Breast epithelium (tissue), 4 donors: ENCODE measurements at regions of chr2 and their contacts with region 1.

Region 1: DNA sequence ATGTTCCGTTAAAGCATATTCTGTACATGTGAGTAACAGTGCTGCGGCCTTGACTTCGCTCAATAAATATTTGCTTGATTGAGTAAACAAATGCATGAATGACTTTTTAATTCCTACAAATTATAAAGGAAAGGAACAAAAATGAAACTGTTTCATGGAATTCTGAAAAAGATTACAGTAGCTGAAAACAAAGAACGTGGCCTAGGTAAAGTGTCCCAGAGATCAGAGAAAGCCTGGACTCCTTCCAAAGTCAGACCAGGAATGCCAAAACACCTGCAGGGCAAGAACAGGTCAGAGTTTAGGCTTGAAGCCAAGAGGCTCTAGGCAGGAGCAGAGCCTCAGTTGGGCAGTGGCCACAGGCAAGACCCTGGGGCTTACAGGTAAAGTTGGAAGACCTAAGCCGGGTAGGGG is 44.3 kb upstream of the FIGN start:
- DNase-seq: no peak
- H3K4me3 ChIP-seq: no peak overlapping the region
- H3K27ac ChIP-seq: no peak overlapping the region
- H3K4me1 ChIP-seq: no peaks in the 10 kb centered on the region
- H3K27me3 ChIP-seq: no peaks in the 10 kb centered on the region
- CTCF ChIP-seq: no peak
- POLR2A ChIP-seq: no peak

Region 2: GRCh38 chr2:163703386-163703785 is 76.7 kb before region 1 on chr2:
- intact Hi-C with region 1: no loop called
- DNase-seq: no peak
- H3K4me3 ChIP-seq: no peak overlapping the region
- H3K27ac ChIP-seq: no peak overlapping the region
- H3K4me1 ChIP-seq: no peaks in the 10 kb centered on the region
- H3K27me3 ChIP-seq: no peaks in the 10 kb centered on the region
- CTCF ChIP-seq: no peak
- POLR2A ChIP-seq: no peak

Region 3: DNA sequence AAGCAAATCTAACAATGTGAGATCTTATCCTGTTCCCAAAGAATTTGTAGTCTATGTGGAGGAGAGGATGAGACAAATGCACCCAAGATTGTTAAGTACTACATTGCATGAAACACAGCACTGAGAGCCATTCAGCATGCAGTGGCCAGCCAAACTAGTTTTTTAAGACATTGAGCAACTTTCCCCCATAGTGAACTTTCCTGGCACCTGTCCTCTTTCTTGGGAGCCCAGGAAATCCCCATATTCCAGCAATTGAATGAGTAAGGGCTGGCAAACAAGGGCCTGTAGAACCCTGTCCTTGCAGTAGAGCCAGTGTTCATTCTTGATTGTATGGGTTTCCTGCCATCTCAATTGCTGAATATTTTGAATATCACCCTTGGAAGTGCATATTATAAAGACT is 14.5 kb after region 1 on chr2:
- intact Hi-C with region 1: loop called (anchors 1 kb)
- DNase-seq: peak in 1 of 2 donors; percentile 21
- H3K4me3 ChIP-seq: no peak overlapping the region
- H3K27ac ChIP-seq: no peak overlapping the region
- H3K4me1 ChIP-seq: no peaks in the 10 kb centered on the region
- H3K27me3 ChIP-seq: no peaks in the 10 kb centered on the region
- CTCF ChIP-seq: no peak
- POLR2A ChIP-seq: no peak

Region 4: DNA sequence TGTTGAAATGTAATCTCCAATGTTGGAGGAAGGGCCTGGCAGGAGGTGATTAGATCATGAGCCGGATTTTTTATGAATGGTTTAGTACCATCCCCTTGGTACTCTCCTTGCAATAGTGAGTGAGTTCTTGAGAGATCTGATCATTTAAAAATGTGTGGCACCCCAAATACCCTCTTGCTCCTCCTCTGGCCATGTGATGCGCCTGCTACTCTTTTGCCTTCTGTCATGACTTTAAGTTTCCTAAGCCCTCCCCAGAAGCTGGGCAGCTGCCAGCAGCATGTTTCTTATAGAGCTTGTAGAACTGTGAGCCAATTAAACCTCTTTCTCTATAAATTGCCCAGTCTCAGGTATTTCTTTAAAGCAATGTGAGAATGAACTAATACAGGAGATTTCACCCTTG is 28.3 kb after region 1 on chr2:
- intact Hi-C with region 1: no loop called
- DNase-seq: no peak
- H3K4me3 ChIP-seq: no peak overlapping the region
- H3K27ac ChIP-seq: no peak overlapping the region
- H3K4me1 ChIP-seq: no peaks in the 10 kb centered on the region
- H3K27me3 ChIP-seq: no peaks in the 10 kb centered on the region
- CTCF ChIP-seq: no peak
- POLR2A ChIP-seq: no peak